Right cardiac atrium (tissue), 5 donors: ENCODE measurements at regions of chr5 and their contacts with region 1.

Region 1: DNA sequence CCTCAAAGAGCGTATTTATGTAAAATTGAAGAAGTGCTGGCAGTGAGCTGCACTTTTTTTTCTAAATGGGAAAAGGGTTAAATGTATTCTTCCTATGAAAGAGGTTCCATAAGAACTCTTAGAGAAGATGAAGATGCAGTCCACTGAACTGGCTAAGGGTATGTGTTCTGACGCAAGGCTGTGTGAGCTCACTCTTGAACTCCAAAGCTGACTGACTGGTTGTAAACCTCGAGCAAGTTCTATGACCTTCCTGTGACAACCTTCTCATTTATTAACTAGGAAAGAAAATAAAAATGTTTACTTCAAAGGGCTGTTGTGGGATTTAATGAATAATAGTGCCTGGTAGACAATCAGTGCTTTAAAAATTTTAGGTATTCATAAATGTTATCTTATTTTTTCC is 46.7 kb downstream of the POC5 start:
- DNase-seq: no peak
- ATAC-seq: no peak
- H3K4me3 ChIP-seq: no peak overlapping the region
- H3K27ac ChIP-seq: no peak overlapping the region
- H3K4me1 ChIP-seq: peaks cover 2% of the 10 kb centered on the region
- H3K27me3 ChIP-seq: no peaks in the 10 kb centered on the region

Region 2: GRCh38 chr5:75389430-75389829 is 281.1 kb before region 1 on chr5:
- intact Hi-C with region 1: loop called in 1 of 4 experiments (anchors 10 kb)
- DNase-seq: no peak
- ATAC-seq: no peak
- H3K4me3 ChIP-seq: no peak overlapping the region
- H3K27ac ChIP-seq: no peak overlapping the region
- H3K4me1 ChIP-seq: no peaks in the 10 kb centered on the region
- H3K27me3 ChIP-seq: no peaks in the 10 kb centered on the region

Region 3: DNA sequence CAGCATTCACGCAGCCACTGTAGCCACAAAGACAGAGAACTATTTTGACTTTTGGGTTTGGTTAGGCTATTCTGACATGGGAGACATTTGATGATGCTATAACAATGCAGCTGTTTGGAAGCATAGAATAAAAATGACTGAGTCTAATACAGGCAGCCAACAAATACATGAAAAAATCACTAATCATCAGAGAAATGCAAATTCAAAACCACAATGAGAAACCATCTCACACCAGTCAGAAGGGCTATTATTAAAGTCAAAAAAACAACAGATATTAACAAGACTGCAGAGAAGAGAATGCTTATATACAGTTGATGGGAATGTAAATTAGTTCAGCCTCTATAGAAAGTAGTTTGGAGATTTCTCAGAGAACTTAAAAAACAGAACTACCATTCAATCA is 153.7 kb after region 1 on chr5:
- intact Hi-C with region 1: no loop called
- DNase-seq: no peak
- ATAC-seq: no peak
- H3K4me3 ChIP-seq: no peak overlapping the region
- H3K27ac ChIP-seq: no peak overlapping the region
- H3K4me1 ChIP-seq: no peaks in the 10 kb centered on the region
- H3K27me3 ChIP-seq: no peaks in the 10 kb centered on the region

Region 4: DNA sequence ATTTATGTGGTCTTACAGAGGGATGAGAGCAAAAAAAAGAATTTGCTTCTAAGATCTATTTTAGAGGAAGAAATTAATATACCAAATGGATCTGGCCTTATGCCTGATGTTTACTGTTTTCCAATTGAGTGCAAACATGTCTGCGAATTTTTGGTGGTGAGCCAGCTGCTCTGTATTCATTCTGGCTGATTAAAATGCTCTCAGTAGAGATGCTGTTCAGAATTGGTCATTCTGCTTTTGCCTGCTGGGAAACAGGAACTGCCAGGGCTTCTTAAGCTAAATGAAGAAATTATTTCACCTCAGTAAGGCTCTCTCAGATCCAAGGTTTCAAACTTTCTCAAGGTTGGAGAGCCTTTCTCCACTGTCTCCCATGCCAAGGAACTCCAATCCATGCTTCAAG is 280.6 kb after region 1 on chr5:
- intact Hi-C with region 1: no loop called
- DNase-seq: no peak
- ATAC-seq: no peak
- H3K4me3 ChIP-seq: no peak overlapping the region
- H3K27ac ChIP-seq: no peak overlapping the region
- H3K4me1 ChIP-seq: no peaks in the 10 kb centered on the region
- H3K27me3 ChIP-seq: no peaks in the 10 kb centered on the region

Region 5: GRCh38 chr5:76074487-76075065 is 404.0 kb after region 1 on chr5:
- intact Hi-C with region 1: no loop called
- DNase-seq: no peak
- ATAC-seq: no peak
- H3K4me3 ChIP-seq: no peak overlapping the region
- H3K27ac ChIP-seq: no peak overlapping the region
- H3K4me1 ChIP-seq: no peaks in the 10 kb centered on the region
- H3K27me3 ChIP-seq: no peaks in the 10 kb centered on the region